ENCODE measurements at regions of chr17 and their contacts with region 1.

Region 1: GRCh38 chr17:50783193-50783660 is 15.9 kb upstream of the ANKRD40CL start:
- DNase-seq: peak; percentile 35 to 85 (median 67)
- ATAC-seq: peak; percentile 56 to 71 (median 62)
- H3K4me3 ChIP-seq: no peak overlapping the region
- H3K4me3 Mint-ChIP-seq: peak overlapping the region in 1 of 3 donors; percentile 5
- H3K27ac ChIP-seq: no peak overlapping the region
- H3K27ac Mint-ChIP-seq: peak overlapping the region in 1 of 2 donors; percentile 78
- H3K4me1 ChIP-seq: peaks cover 12 to 36% of the 10 kb centered on the region in 2 experiments
- H3K4me1 Mint-ChIP-seq: peaks cover 28 to 35% (median 31%) of the 10 kb centered on the region in 3 donors
- H3K27me3 ChIP-seq: peaks cover 0 to 18% of the 10 kb centered on the region in 2 experiments
- H3K27me3 Mint-ChIP-seq: peaks cover 0 to 2% of the 10 kb centered on the region in 2 donors

Region 2: DNA sequence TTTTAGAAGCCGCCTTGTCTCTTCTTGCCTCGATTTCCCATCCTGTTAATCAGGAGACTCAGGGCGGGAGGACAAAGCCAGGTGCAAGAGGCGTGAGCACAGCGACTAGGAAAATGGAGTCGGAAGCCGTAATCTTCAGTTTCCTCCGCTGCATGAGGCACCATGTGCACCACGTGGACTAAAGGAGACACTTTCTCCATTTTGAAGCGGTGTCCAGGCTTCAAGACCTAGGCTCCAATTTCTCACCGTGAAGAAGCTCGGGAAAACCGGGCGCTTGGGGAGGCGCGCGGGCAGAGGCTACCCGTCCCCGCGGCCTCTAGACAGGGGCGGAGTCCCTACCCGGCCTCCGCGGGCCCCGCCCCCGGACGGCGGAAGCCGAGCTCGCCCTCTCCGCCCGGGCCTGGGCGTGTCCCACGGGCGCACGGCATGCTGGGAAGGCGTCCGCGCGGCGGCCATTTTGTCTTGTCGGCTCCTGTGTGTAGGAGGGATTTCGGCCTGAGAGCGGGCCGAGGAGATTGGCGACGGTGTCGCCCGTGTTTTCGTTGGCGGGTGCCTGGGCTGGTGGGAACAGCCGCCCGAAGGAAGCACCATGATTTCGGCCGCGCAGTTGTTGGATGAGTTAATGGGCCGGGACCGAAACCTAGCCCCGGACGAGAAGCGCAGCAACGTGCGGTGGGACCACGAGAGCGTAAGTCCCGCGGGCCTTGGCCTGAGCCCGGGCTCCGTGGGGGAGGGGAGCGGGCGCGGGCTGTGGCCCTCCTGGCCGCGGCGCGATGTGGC is 63.9 kb before region 1 on chr17 and contains the start of gene LUC7L3:
- CTCF ChIA-PET with region 1: interaction called in 1 of 2 experiments, 3 read pairs
- POLR2A ChIA-PET with region 1: interaction called in 1 of 2 experiments, 14 read pairs
- DNase-seq: peak; percentile 78 to 95 (median 89)
- ATAC-seq: peak; percentile 91 to 95 (median 92)
- H3K4me3 ChIP-seq: peak within 1 kb of the TSS; percentile 91 to 94
- H3K4me3 Mint-ChIP-seq: peak within 1 kb of the TSS; percentile 96 to 98 (median 97)
- H3K27ac ChIP-seq: peak within 1 kb of the TSS; percentile 97
- H3K27ac Mint-ChIP-seq: peak within 1 kb of the TSS; percentile 98 to 99
- H3K4me1 ChIP-seq: peaks cover 24 to 26% of the 10 kb centered on the region in 2 experiments
- H3K4me1 Mint-ChIP-seq: peaks cover 33 to 46% (median 37%) of the 10 kb centered on the region in 3 donors
- H3K27me3 ChIP-seq: no peaks in the 10 kb centered on the region
- H3K27me3 Mint-ChIP-seq: no peaks in the 10 kb centered on the region
- total RNA-seq, gene LUC7L3: 126 to 273 (median 232) TPM

Region 3: DNA sequence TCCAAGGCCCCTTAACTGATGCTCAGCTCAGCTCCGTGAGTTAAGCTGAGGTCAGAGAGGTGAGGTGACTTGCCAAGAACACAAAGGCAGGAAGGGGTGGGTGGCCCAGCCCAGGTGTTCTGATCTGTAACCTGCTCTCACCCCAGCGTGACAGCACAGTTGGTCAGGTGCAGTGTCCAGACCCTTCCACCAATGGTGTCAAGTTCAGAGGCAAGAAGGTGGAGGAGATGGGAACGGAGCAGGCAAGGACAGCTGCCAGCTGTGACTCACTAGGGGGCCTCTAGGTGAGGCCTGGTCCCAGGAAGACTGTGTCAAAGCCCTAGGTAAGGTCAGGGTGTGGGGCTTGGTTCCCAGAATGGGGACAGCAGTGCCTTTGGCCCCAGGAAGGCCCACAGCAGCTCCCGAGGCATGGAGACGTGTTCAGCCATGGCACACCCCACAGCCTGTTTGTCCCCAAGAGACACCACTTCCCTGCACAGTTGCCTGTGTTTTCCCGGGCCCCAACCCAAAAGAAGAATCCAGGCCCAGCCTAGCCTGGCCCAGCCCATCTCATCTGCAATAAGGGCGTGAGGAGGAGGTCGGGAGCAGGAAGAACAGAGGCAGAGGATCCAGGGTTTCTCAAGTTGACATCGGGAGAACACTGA is 59.4 kb after region 1 on chr17:
- CTCF ChIA-PET with region 1: interaction called, 4 to 16 read pairs
- POLR2A ChIA-PET with region 1: no interaction called
- DNase-seq: peak in 1 of 35 experiments; percentile 7
- ATAC-seq: peak in 1 of 4 experiments; percentile 9
- H3K4me3 ChIP-seq: no peak overlapping the region
- H3K4me3 Mint-ChIP-seq: no peak overlapping the region
- H3K27ac ChIP-seq: no peak overlapping the region
- H3K27ac Mint-ChIP-seq: no peak overlapping the region
- H3K4me1 ChIP-seq: no peaks in the 10 kb centered on the region
- H3K4me1 Mint-ChIP-seq: peaks cover 0 to 3% (median 0%) of the 10 kb centered on the region in 3 donors
- H3K27me3 ChIP-seq: peaks cover 0 to 3% of the 10 kb centered on the region in 2 experiments
- H3K27me3 Mint-ChIP-seq: no peaks in the 10 kb centered on the region

Measured in T-cell (primary cell).